ENCODE measurements at regions of chr19 and their contacts with region 1.

Region 1: GRCh38 chr19:41746593-41747227 is 8.6 kb upstream of the CEACAM6 start:
- DNase-seq: peak; percentile 22
- H3K4me3 Mint-ChIP-seq: no peak overlapping the region
- H3K27ac Mint-ChIP-seq: no peak overlapping the region
- H3K4me1 Mint-ChIP-seq: no peaks in the 10 kb centered on the region
- H3K27me3 Mint-ChIP-seq: peaks cover 75% of the 10 kb centered on the region

Region 2: DNA sequence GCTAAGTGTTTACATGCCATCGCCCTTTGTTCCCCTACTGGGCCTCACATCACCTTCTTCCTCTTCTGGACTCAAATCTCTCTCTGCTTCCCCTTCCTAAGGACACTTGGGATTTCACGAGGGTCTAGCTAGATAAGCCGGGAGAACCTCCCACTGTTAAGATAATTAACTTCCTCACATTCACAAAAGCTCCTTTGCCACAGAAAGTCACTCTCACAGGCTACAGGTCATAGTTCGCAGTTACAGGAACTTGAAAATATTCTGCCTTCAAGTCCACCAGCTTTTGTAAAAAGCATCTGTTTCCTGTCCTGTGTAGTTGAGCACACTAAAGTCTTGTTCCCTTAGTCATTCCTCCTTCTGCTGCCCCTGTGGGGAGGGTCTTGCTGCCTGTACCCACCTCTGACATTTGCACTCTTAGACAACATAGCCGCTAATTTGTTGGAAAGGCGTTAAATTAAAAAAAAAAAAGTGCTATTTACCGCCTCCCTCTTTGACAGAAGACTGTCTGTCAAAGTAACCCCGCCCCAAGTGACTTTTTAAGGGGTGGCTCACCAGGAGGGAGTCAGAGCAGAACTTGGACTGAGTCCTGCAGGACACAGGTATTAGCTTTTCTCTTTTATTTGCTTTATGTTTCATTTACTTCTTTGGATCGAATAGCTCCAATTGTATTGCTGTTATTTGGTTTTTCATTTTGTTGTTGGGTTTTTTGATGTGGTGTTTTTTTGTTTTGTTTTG is 197.6 kb before region 1 on chr19:
- intact Hi-C with region 1: loop called (anchors 5 kb)
- DNase-seq: peak; percentile 78
- H3K4me3 Mint-ChIP-seq: peak overlapping the region; percentile 91
- H3K27ac Mint-ChIP-seq: peak overlapping the region; percentile 93
- H3K4me1 Mint-ChIP-seq: peaks cover 76% of the 10 kb centered on the region
- H3K27me3 Mint-ChIP-seq: no peaks in the 10 kb centered on the region

Region 3: DNA sequence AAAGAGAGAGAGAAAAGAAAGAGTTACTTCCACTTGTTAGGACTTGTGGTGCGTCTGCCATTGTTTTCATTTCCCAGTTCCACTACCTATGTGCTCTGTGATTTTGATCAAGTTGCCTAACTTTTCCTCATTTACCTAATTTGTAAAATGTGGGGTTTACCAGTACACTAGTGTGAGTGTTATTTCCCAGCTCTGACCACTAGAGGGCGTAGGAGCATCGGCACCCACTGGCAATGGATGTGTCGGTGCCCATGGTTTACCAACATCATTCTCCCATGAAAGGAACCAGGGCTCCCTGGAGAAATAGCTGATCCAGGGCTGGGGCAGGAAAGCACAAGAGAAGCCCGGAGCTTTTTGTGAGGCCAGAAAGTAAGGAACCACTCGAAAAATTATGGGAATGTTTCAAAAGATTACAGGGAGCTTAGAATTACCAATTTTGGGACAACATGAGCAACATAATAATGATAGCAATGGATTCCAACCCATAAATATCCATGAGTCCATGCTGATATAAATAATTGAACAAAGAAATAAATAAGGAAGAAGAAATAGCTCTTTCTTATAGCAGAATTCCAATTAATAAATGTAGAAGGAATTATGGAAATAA is 104.7 kb before region 1 on chr19:
- intact Hi-C with region 1: loop called (anchors 5 kb)
- DNase-seq: peak; percentile 48
- H3K4me3 Mint-ChIP-seq: no peak overlapping the region
- H3K27ac Mint-ChIP-seq: no peak overlapping the region
- H3K4me1 Mint-ChIP-seq: no peaks in the 10 kb centered on the region
- H3K27me3 Mint-ChIP-seq: no peaks in the 10 kb centered on the region

Region 4: DNA sequence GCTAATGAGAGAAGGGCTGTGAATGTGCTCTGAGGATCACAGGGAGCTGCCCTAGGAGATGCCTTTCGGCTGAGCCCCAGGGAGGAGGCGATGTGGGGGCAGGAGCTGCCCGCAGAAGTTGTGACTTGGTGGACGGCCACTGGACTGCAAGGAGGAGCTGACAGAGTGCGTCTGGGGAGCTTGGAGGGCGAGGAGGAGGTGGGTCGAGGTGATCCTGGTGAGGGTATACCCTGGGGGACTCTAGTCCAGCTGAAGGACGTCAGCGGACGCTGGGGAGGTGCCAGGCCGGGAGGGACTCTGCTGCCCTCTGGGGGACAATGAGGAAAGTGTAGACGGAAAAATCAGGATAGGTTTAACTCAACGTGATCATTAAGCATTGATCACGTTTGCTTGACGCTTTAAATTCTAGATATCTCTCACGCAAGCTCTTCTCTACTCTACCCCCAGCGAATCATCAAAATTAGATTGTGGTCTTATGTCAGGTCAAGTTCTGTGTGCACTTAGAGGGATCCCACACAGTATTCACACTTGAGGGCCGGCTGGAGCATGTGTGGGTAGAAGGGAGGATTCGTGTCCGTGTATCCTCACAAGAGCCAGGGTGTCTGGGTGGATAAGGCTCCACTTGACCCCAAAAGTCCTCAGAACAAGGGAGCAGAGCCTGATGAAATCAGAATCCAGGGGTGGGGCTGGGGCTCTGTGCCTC is 55.3 kb before region 1 on chr19:
- intact Hi-C with region 1: loop called (anchors 5 kb)
- DNase-seq: no peak
- H3K4me3 Mint-ChIP-seq: no peak overlapping the region
- H3K27ac Mint-ChIP-seq: no peak overlapping the region
- H3K4me1 Mint-ChIP-seq: no peaks in the 10 kb centered on the region
- H3K27me3 Mint-ChIP-seq: peaks cover 19% of the 10 kb centered on the region

Region 5: DNA sequence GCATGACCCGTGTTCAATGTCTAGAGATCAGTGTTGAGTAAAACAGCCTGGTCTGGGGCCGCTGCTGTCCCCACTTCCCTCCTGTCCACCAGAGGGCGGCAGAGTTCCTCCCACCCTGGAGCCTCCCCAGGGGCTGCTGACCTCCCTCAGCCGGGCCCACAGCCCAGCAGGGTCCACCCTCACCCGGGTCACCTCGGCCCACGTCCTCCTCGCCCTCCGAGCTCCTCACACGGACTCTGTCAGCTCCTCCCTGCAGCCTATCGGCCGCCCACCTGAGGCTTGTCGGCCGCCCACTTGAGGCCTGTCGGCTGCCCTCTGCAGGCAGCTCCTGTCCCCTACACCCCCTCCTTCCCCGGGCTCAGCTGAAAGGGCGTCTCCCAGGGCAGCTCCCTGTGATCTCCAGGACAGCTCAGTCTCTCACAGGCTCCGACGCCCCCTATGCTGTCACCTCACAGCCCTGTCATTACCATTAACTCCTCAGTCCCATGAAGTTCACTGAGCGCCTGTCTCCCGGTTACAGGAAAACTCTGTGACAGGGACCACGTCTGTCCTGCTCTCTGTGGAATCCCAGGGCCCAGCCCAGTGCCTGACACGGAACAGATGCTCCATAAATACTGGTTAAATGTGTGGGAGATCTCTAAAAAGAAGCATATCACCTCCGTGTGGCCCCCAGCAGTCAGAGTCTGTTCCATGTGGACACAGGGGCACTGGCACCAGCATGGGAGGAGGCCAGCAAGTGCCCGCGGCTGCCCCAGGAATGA is 39.8 kb before region 1 on chr19:
- intact Hi-C with region 1: loop called (anchors 1 kb)
- DNase-seq: peak; percentile 58
- H3K4me3 Mint-ChIP-seq: no peak overlapping the region
- H3K27ac Mint-ChIP-seq: no peak overlapping the region
- H3K4me1 Mint-ChIP-seq: peaks cover 6% of the 10 kb centered on the region
- H3K27me3 Mint-ChIP-seq: peaks cover 12% of the 10 kb centered on the region

Region 6: DNA sequence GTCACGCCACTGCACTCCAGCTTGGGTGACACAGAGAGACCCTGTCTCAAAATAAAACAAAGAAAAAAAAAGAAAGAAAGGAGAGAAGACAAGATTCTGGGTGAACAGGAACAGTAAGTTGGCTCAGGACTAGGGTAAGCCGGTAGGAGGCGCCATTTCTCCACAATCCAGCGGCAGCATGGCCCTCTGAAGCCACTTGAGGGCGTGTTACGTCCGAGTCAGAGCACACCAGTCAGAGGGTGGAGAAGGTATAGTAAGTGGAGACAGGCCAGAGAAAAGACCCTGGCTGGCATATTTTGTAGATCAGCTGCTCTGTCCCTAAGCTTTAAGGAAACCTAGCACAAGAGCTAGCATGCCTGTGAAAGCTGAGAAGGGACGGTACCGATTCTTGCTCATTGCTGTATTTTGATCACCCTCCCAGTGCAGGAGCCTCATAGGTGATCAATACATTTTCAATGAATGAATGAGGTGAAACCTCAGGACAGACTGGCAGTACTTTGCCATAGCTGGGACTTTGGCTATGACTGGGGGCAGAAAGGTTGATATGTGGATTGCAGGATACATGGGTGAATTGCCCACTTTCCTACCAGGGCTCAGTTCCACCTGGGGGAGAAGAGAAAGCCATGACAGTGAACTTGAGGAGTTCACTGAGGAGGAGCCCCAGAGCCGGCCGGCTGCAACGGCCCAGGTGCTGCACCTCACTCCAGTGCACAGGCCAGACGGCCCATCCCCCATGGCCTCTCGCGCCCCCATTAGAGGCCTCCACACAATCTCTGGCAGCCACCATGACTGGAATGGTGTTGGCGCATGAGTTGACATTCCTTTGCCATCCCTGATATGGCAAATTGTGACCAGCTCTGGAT is 362.0 kb after region 1 on chr19:
- intact Hi-C with region 1: no loop called
- DNase-seq: peak; percentile 82
- H3K4me3 Mint-ChIP-seq: no peak overlapping the region
- H3K27ac Mint-ChIP-seq: peak overlapping the region; percentile 42
- H3K4me1 Mint-ChIP-seq: peaks cover 43% of the 10 kb centered on the region
- H3K27me3 Mint-ChIP-seq: no peaks in the 10 kb centered on the region